ENCODE measurements at regions of chr4 and their contacts with region 1.

Region 1: GRCh38 chr4:70901984-70902576 is at the start of gene MOB1B:
- DNase-seq: peak; percentile 94
- ATAC-seq: peak; percentile 96
- H3K4me3 Mint-ChIP-seq: peak within 1 kb of the TSS; percentile 96
- H3K27ac Mint-ChIP-seq: peak within 1 kb of the TSS; percentile 89
- H3K4me1 Mint-ChIP-seq: peaks cover 27% of the 10 kb centered on the region
- H3K27me3 Mint-ChIP-seq: no peaks in the 10 kb centered on the region
- total RNA-seq, gene MOB1B: 18.5 to 21.9 TPM

Region 2: DNA sequence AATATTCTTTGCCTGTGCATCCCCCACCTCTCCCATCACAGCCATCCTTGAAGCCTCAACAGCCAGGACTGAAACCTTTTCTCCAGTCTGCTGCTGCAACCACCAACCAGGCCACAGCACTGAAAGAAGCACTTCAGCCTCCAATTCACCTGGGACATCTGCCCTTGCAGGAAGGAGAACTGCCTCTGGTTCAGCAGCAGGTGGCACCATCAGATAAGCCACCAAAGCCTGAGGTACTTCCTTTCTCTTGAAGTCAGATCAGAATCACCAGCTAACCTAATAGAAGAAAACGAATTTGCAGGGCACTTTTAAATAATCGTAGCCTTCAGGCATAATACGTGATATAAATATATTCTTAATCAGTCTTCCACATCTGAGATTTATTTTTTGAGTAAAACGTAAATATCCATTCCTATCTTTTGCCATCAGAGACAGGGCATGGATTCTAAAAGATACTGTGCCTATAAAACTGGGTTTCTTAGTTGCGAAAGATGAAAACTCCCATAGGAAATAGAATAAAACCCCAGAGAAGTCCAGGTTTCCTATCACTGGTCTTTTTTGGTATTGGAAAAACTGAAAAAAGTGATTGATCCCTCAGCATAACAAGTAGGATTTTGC is 300.5 kb before region 1 on chr4:
- CTCF ChIA-PET with region 1: no interaction called
- POLR2A ChIA-PET with region 1: no interaction called
- intact Hi-C with region 1: no loop called
- DNase-seq: peak; percentile 79
- ATAC-seq: peak; percentile 92
- H3K4me3 Mint-ChIP-seq: no peak overlapping the region
- H3K27ac Mint-ChIP-seq: no peak overlapping the region
- H3K4me1 Mint-ChIP-seq: no peaks in the 10 kb centered on the region
- H3K27me3 Mint-ChIP-seq: peaks cover 2% of the 10 kb centered on the region

Region 3: DNA sequence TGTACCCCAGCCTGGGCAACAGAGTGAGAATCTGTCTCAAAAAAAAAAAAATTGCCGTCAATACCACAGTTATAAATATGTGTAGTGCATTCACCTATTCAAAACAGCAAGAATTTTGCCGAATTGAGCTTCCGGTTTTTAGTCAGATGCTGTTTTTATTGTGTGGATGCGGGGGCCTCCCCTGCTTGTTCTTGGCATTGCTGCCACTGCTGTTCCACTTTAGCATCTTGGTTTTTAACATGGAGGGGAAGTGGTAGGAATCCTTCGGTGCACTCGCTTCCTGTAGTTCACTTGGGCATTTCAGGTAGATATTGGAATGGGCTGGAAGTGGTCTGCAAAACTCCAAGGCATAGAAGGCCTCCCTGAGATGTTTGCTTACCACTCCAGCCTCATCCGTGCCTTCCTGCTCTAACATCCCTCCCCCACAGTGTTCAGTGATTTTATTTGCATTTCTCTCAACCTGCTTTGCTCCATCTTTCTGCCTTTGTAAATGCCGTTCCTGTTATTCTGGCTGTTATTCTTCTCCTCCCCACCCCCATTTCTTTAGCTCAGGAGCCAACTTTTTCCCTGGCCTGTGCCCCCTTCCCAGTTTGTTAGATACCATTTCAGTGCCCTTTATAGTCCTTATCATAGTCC is 25.5 kb after region 1 on chr4:
- CTCF ChIA-PET with region 1: interaction called, 3 read pairs
- POLR2A ChIA-PET with region 1: no interaction called
- intact Hi-C with region 1: loop called in 1 of 2 experiments (anchors 2 kb)
- DNase-seq: peak; percentile 70
- ATAC-seq: peak; percentile 75
- H3K4me3 Mint-ChIP-seq: peak overlapping the region; percentile 33
- H3K27ac Mint-ChIP-seq: peak overlapping the region; percentile 78
- H3K4me1 Mint-ChIP-seq: peaks cover 43% of the 10 kb centered on the region
- H3K27me3 Mint-ChIP-seq: no peaks in the 10 kb centered on the region